Adrenal gland (tissue), 19 donors: ENCODE measurements at regions of chr18 and their contacts with region 1.

Region 1: DNA sequence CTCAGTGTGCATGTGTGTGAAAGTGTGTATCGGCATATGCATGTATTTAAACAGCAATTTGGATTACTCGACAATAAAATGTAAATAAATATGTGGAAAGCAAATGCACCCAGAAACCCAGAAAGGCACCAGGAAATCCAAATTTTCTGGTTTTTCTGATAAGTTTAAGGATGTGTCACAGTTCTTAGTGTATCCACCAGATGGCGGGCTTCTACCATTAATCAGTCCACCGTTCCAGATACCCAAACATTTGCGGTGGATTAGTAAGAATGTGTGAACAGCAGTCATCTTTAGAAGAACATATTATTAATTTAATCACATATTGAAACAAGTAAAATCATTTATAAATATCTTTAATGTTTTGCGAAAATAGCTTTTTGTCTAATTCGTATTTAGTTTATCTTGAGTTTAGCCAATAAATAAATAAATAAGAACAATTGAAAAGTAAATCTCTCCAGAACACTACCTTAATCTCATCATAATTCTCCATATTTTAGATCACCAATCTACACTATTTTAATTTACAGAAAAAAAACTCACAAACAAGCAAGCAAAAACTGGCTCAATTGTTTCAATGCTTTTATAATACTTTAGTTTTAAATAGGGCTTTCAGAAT is 298.9 kb downstream of the DSEL start:
- DNase-seq: peak; percentile 45 to 81 (median 58)
- H3K4me3 ChIP-seq: no peak overlapping the region
- H3K27ac ChIP-seq: no peak overlapping the region
- H3K4me1 ChIP-seq: no peaks in the 10 kb centered on the region
- H3K27me3 ChIP-seq: no peaks in the 10 kb centered on the region
- CTCF ChIP-seq: peak; percentile 72 to 88 (median 85)
- POLR2A ChIP-seq: no peak

Region 2: DNA sequence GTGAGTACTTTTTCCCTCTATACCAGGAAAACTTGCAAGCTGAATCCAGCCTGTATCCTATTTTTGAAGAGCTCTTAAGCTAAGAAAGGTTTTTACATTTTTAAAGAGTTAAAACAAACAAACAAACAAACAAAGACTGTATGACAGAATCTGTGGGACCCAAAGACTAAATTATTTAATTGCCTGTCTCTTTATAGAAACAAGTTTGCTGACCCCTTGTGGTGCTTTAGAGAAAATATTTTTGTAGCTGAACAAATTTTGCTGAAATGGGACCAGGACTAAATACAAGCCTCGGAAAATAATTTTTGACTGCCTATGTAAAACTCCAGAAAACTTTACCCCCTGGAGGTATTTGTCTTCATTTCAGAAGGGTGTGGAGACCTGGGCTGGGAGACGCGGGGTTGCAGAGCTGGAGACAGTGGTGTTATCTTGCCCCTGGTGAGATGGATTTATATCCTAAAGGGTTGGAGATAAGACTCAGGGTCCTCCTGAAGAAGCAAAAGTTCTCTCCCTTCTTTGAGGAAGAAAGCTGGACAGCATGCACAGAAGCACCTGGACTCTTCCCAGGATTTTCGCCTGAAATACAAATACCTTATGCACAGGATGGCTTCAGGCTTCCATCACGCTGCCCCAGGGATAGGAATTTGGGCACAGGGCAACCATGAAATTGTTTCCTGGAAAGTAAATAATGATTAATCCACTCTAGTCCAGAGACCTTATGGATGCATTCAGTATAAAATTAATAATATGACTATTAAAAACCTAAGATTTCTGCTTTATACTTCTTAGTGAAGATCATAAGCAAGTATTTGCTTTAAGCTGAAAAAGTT is 1442.9 kb after region 1 on chr18:
- intact Hi-C with region 1: loop called (anchors 10 kb)
- DNase-seq: no peak
- H3K4me3 ChIP-seq: no peak overlapping the region
- H3K27ac ChIP-seq: no peak overlapping the region
- H3K4me1 ChIP-seq: no peaks in the 10 kb centered on the region
- H3K27me3 ChIP-seq: no peaks in the 10 kb centered on the region
- CTCF ChIP-seq: peak; percentile 33 to 60 (median 53)
- POLR2A ChIP-seq: no peak

Region 3: DNA sequence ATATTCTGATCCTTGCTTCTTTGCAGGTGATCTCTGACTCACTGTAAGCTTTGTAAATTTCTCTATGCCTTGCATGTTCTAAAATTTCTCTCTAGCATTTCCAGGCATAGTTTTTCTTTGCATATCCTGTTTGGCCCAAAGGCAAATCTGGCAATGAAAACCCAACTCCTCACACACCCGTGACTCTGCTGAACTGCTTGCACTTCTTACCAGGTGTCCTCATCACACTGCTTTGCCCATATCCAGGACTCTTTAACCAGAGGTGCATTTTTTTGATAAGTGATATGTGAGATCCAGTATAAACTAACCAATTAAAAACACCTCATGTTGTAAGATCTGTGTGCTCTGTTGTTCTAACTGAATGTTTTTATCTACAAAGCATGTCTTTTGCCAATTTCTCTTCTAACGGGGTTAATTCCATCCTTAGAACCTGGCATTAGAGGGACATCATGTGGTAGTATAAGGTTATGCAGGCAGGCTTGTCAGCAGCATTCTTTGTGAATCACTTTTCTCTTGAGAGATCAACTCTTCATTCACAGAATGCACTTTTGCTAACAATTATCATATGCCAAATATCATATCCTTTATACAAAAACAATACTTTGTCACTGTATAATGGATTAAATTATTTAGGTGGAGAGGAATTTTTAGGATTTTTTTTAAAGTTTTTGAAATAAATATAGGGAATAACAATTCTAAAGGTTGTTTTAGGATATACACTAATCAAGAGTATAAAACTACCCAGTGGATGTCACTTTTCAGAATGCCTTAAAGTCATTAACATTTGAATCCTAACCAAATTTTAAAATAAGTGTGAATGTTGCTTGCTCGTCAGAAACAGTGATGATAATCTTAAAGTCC is 1518.1 kb after region 1 on chr18:
- intact Hi-C with region 1: loop called in 1 of 2 experiments (anchors 10 kb)
- DNase-seq: peak in 2 of 7 donors; percentile 9 to 10
- H3K4me3 ChIP-seq: no peak overlapping the region
- H3K27ac ChIP-seq: no peak overlapping the region
- H3K4me1 ChIP-seq: no peaks in the 10 kb centered on the region
- H3K27me3 ChIP-seq: no peaks in the 10 kb centered on the region
- CTCF ChIP-seq: peak; percentile 46 to 78 (median 70)
- POLR2A ChIP-seq: no peak